Panc1 (cell line): ENCODE measurements at regions of chr18 and their contacts with region 1.

Region 1: DNA sequence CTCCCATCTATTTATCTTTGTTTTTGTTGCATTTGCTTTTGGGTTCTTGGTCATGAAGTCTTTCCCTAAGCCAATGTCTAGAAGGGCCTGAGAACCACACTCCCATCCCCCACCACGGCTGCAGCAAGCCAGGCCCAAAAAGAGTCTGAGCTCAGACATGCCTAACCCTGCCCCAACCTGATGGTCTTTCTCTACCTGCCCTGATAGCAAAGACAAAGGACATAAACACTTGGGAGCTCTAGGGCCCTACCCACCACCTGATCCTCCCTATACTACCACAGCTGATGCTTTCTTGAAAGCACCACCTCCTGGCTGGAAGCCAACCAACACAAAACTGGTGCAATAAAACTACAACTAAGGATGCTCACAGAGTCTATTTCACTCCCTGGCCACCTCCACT is 233.4 kb downstream of the WDR7 start:
- DNase-seq: no peak
- ATAC-seq: no peak
- H3K4me3 ChIP-seq: no peak overlapping the region
- H3K27ac ChIP-seq: no peak overlapping the region
- H3K4me1 ChIP-seq: no peaks in the 10 kb centered on the region
- H3K27me3 ChIP-seq: no peaks in the 10 kb centered on the region
- CTCF ChIP-seq: no peak

Region 2: GRCh38 chr18:56910967-56911366 is 26.5 kb after region 1 on chr18:
- CTCF ChIA-PET with region 1: no interaction called
- POLR2A ChIA-PET with region 1: interaction called, 10 read pairs
- in situ Hi-C with region 1: no loop called
- intact Hi-C with region 1: no loop called
- DNase-seq: no peak
- ATAC-seq: no peak
- H3K4me3 ChIP-seq: no peak overlapping the region
- H3K27ac ChIP-seq: no peak overlapping the region
- H3K4me1 ChIP-seq: no peaks in the 10 kb centered on the region
- H3K27me3 ChIP-seq: no peaks in the 10 kb centered on the region
- CTCF ChIP-seq: no peak